SK-N-SH (cell line): ENCODE measurements at regions of chr3 and their contacts with region 1.

Region 1: GRCh38 chr3:128170805-128171516 is 17.7 kb downstream of the EEFSEC start:
- DNase-seq: peak; percentile 80
- H3K4me3 ChIP-seq: no peak overlapping the region; a peak in 1 of 4 replicates
- H3K27ac ChIP-seq: peak overlapping the region in 1 of 2 experiments; percentile 76; a peak in 2 of 4 replicates
- H3K4me1 ChIP-seq: peaks cover 0 to 73% of the 10 kb centered on the region in 2 experiments; a peak in 2 of 4 replicates
- H3K27me3 ChIP-seq: no peaks in the 10 kb centered on the region
- CTCF ChIP-seq: peak; percentile 92
- EP300 ChIP-seq: peak in 1 of 2 experiments; percentile 40; a peak in 1 of 4 replicates
- RAD21 ChIP-seq: peak; percentile 98

Region 2: DNA sequence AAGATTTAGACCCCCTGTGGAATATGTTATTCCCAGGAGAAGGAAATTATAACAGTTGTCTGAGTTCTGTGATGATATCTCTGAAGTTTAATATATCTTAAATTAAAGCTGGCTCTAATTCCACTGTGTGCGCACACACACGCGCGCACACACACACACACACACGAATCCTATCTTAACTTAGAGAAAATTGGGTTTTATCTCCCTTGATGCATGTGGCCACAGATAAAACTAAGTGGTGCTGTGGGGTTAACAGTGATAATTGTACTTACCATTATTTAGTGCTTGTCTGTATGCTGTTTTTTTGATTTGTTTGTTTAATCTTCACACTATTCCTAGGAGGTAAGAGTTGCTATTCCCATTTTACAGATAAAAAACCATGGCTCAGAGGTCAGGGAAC is 10.3 kb before region 1 on chr3:
- CTCF ChIA-PET with region 1: interaction called, 11 read pairs
- POLR2A ChIA-PET with region 1: no interaction called
- DNase-seq: no peak
- H3K4me3 ChIP-seq: no peak overlapping the region
- H3K27ac ChIP-seq: no peak overlapping the region
- H3K4me1 ChIP-seq: peaks cover 0 to 18% of the 10 kb centered on the region in 2 experiments; a peak in 2 of 4 replicates
- H3K27me3 ChIP-seq: no peaks in the 10 kb centered on the region
- CTCF ChIP-seq: no peak
- EP300 ChIP-seq: no peak
- RAD21 ChIP-seq: no peak

Region 3: GRCh38 chr3:128297401-128298138 is 126.6 kb after region 1 on chr3:
- CTCF ChIA-PET with region 1: interaction called, 13 read pairs
- POLR2A ChIA-PET with region 1: no interaction called
- DNase-seq: no peak
- H3K4me3 ChIP-seq: no peak overlapping the region
- H3K27ac ChIP-seq: peak overlapping the region in 1 of 2 experiments; percentile 62; a peak in 2 of 4 replicates
- H3K4me1 ChIP-seq: peaks cover 0 to 40% of the 10 kb centered on the region in 2 experiments; a peak in 2 of 4 replicates
- H3K27me3 ChIP-seq: no peaks in the 10 kb centered on the region
- CTCF ChIP-seq: no peak
- EP300 ChIP-seq: no peak
- RAD21 ChIP-seq: no peak

Region 4: GRCh38 chr3:128322066-128323022 is 151.4 kb after region 1 on chr3:
- CTCF ChIA-PET with region 1: interaction called, 13 read pairs
- POLR2A ChIA-PET with region 1: interaction called, 3 read pairs
- DNase-seq: no peak
- H3K4me3 ChIP-seq: no peak overlapping the region
- H3K27ac ChIP-seq: peak overlapping the region in 1 of 2 experiments; percentile 98; a peak in 1 of 4 replicates
- H3K4me1 ChIP-seq: peaks cover 0 to 90% of the 10 kb centered on the region in 2 experiments; a peak in 2 of 4 replicates
- H3K27me3 ChIP-seq: no peaks in the 10 kb centered on the region
- CTCF ChIP-seq: peak; percentile 53
- EP300 ChIP-seq: no peak
- RAD21 ChIP-seq: peak; percentile 62